ENCODE measurements at regions of chr17 and their contacts with region 1.

Region 1: DNA sequence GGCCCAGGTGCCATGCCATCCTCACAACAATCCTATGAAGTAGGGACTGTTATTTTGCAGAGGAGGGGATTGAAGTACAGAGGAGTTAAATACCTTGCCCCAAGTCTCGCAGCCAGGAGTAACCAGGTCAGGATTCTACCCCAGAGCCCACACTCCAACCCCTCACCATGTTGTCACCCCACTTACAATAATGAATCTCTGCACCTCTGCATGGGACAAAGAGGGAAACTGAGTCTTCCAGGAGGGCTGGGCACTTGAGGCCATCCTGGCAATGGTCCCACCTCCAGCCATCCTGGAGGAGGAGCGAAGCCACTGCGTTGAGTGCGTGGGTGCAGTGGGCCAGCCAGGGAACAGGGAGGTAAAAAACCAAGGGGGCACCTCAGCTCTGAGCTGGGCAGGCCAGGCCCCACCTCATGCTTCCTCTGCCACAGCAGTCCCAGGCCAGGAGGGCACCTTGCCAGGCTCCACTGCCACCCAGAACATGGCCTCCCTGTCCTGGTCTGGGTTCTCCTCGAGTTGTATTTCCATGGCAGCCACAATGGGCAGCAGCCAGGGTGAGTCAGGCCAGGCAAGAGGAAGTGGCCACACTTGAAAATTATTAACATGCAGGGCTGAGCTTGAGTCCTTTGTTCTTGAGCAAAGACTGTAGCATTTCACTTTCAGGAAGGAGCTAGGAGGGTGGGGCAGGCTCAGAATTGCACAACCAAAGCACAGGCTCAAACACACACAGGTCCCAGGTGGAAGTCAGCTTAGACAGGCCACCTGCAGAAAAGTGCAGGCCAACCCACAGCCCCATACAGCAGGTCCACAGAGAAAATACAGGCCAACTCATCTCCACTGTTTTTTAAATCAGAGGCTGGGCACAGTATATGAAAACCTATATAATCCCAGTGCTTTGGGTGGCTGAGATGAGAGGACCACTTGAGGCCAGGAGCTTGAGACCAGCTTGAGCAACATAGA is 52.1 kb downstream of the CUEDC1 start:
- DNase-seq: peak; percentile 95
- H3K4me3 Mint-ChIP-seq: peak overlapping the region; percentile 22
- H3K27ac Mint-ChIP-seq: peak overlapping the region; percentile 23
- H3K4me1 Mint-ChIP-seq: peaks cover 49% of the 10 kb centered on the region
- H3K27me3 Mint-ChIP-seq: no peaks in the 10 kb centered on the region
- CTCF ChIP-seq: no peak

Region 2: GRCh38 chr17:57772774-57773173 is 130.3 kb before region 1 on chr17:
- CTCF ChIA-PET with region 1: no interaction called
- POLR2A ChIA-PET with region 1: no interaction called
- intact Hi-C with region 1: no loop called
- DNase-seq: no peak
- H3K4me3 Mint-ChIP-seq: no peak overlapping the region
- H3K27ac Mint-ChIP-seq: no peak overlapping the region
- H3K4me1 Mint-ChIP-seq: no peaks in the 10 kb centered on the region
- H3K27me3 Mint-ChIP-seq: peaks cover 92% of the 10 kb centered on the region
- CTCF ChIP-seq: no peak

Region 3: DNA sequence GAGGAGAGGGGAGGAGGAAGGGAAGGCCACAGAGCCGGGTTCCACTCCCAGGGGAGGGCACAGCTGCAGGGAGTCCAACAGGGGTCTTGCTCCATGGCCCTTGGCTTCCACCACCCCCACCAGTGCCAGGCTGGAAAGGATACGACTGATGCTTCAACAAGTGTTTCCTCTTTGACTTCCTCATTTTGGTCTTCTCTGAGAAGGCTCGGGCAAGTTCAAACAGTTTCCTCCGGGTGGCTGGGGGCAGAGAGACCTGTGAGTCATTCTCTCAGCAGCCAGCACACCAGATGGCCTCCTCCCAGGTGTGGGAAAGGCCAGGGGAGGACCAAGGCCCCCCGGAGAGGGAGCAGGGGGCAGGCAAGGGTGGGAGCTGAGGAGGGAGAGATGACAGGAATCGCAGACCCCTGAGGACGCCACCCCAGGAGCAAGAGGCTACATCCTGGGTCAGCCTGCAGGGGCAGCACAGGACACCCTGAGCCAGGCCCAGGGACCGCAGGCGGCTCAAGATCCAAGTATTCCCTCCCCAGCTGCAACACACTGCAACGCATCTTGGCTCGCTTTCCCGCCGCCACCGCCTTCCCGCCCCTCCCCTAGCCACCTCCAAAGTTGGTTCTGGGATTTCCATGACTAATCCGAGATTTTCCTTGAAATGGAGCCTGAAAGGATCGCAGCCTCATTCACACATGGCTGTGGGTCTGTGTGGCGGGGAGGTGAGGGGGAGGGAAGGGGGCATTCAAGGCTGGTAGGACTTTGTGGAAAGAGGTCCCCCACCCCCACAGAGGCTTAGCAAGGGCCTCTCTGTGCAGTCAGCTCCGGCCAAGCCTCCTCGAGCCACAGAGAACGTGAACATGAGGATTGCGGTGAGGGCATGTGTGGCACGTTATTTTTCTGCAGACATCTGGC is 34.8 kb before region 1 on chr17:
- CTCF ChIA-PET with region 1: interaction called, 4 read pairs
- POLR2A ChIA-PET with region 1: interaction called, 5 read pairs
- intact Hi-C with region 1: loop called (anchors 5 kb)
- DNase-seq: peak; percentile 93
- H3K4me3 Mint-ChIP-seq: peak overlapping the region; percentile 41
- H3K27ac Mint-ChIP-seq: peak overlapping the region; percentile 93
- H3K4me1 Mint-ChIP-seq: peaks cover 33% of the 10 kb centered on the region
- H3K27me3 Mint-ChIP-seq: no peaks in the 10 kb centered on the region
- CTCF ChIP-seq: peak; percentile 65

Region 4: DNA sequence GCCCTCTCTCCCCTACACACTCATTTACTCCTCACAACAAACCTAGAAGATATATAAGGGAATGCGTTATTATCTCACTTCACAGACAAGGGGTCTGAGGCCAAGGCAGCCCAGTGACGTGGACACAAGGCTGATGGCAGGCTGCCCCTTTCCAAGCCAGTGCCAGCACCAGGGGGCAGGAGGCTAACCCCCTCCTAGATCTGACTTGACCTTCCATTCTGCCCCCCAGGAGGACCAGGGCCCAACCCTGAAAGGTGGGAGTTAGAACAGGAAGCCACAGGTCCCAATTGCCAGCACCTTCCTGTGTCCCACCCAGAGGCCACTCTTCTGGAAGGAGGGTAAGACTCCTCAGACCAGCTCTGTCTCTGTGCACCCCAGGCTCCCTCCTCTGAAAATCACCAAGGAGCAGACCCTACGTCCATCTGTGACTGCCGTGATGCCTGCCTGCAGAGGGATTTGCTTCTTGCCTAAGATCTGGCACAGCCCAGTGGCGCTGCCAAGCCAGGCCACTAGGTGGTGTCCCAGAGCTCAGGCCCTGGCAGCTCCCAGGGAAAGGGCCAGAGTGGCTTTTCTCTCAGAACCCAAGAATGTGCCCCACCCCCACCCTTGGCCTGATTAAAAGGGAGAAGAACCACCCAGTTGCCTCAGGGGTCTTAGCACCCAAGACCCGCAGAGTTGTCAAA is 10.8 kb before region 1 on chr17:
- CTCF ChIA-PET with region 1: interaction called, 8 read pairs
- POLR2A ChIA-PET with region 1: interaction called, 45 read pairs
- intact Hi-C with region 1: loop called (anchors 1 kb)
- DNase-seq: peak; percentile 91
- H3K4me3 Mint-ChIP-seq: peak overlapping the region; percentile 64
- H3K27ac Mint-ChIP-seq: peak overlapping the region; percentile 87
- H3K4me1 Mint-ChIP-seq: peaks cover 41% of the 10 kb centered on the region
- H3K27me3 Mint-ChIP-seq: no peaks in the 10 kb centered on the region
- CTCF ChIP-seq: peak; percentile 96

Region 5: GRCh38 chr17:57955183-57955931 is 52.3 kb after region 1 on chr17 and contains the start of gene CUEDC1:
- CTCF ChIA-PET with region 1: interaction called, 4 read pairs
- POLR2A ChIA-PET with region 1: interaction called, 102 read pairs
- intact Hi-C with region 1: no loop called
- DNase-seq: peak; percentile 53
- H3K4me3 Mint-ChIP-seq: peak within 1 kb of the TSS; percentile 70
- H3K27ac Mint-ChIP-seq: no peak within 1 kb of the TSS
- H3K4me1 Mint-ChIP-seq: peaks cover 22% of the 10 kb centered on the region
- H3K27me3 Mint-ChIP-seq: no peaks in the 10 kb centered on the region
- CTCF ChIP-seq: peak; percentile 23
- total RNA-seq, gene CUEDC1: 15.6 and 21.5 TPM in 2 replicates

Region 6: DNA sequence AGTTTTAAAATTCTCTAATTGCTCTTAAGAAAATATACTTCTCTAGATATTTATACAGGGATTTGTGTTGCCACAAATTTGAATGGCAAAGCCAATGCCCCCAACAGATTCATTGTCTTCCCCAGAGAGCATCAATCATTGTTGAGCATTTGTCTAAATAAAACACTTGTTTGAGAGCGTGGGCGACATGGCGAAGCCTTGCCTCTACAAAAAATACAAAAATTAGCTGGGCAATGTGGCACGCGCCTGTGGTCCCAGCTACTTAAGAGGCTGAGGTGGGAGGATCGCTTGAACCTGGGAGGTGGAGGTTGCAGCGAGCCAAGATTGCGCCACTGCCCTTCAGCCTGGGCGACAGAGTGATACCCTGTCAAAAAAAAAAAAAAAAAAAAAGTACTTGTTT is 117.3 kb after region 1 on chr17:
- CTCF ChIA-PET with region 1: no interaction called
- POLR2A ChIA-PET with region 1: no interaction called
- intact Hi-C with region 1: no loop called
- DNase-seq: no peak
- H3K4me3 Mint-ChIP-seq: no peak overlapping the region
- H3K27ac Mint-ChIP-seq: no peak overlapping the region
- H3K4me1 Mint-ChIP-seq: no peaks in the 10 kb centered on the region
- H3K27me3 Mint-ChIP-seq: peaks cover 21% of the 10 kb centered on the region
- CTCF ChIP-seq: no peak

Region 7: DNA sequence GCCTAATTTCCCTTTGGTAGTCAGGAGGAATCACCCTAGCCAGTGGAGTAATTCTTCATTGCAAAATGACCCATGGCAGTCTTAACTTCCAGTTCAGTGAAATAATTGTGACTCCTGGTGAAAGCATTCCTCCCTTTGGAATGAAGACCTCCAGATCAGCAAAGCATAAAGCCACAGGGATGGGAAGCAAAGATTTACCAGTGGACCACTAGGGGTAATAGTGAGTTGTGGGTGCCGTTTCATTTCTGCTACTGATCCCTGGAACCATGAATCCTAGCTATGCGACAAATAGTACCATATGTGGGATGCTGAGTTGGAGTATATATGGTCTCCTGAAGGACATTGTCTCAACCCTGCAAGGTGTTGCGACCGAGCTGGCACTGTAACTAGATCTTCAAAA is 193.8 kb after region 1 on chr17:
- CTCF ChIA-PET with region 1: no interaction called
- POLR2A ChIA-PET with region 1: no interaction called
- intact Hi-C with region 1: no loop called
- DNase-seq: no peak
- H3K4me3 Mint-ChIP-seq: no peak overlapping the region
- H3K27ac Mint-ChIP-seq: no peak overlapping the region
- H3K4me1 Mint-ChIP-seq: peaks cover 12% of the 10 kb centered on the region
- H3K27me3 Mint-ChIP-seq: no peaks in the 10 kb centered on the region
- CTCF ChIP-seq: no peak